ENCODE measurements at regions of chr17 and their contacts with region 1.

Region 1: DNA sequence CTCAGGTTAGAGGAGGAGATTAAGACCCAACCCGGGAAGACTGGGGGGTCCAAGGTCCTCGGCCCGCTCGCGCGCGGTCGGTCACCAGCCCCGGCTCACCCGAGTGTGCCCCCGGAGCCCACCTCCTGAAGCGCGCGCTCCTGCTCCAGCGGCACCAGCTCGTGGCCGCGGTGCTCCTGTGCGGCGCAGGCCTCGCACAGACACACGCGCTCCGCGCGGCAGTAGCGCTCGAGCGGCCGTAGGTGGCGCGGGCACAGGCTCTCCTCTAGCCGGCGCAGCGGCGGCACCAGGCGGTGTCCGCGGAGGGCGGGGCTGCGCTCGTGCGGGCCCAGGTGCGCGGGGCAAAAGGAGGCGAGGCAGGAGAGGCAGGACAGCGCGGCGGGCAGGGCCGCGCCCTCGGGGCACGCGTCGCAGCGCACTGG is 618 bp downstream of the TRIM47 start:
- H3K4me3 ChIP-seq: peak overlapping the region; percentile 24
- H3K27ac ChIP-seq: peak overlapping the region; percentile 61; the same call in 1 of the 2 replicates
- H3K4me1 ChIP-seq: peaks cover 2% of the 10 kb centered on the region
- CTCF ChIP-seq: no peak; the same call in none of the 2 replicates

Region 2: GRCh38 chr17:75861927-75862317 is 15.8 kb before region 1 on chr17:
- CTCF ChIA-PET with region 1: interaction called, 84 read pairs
- POLR2A ChIA-PET with region 1: interaction called, 34 read pairs
- H3K4me3 ChIP-seq: no peak overlapping the region
- H3K27ac ChIP-seq: no peak overlapping the region
- H3K4me1 ChIP-seq: 0 out of 2 replicates have a peak, but pooled peaks cover 4% of the 10 kb centered on the region
- CTCF ChIP-seq: no peak

Region 3: DNA sequence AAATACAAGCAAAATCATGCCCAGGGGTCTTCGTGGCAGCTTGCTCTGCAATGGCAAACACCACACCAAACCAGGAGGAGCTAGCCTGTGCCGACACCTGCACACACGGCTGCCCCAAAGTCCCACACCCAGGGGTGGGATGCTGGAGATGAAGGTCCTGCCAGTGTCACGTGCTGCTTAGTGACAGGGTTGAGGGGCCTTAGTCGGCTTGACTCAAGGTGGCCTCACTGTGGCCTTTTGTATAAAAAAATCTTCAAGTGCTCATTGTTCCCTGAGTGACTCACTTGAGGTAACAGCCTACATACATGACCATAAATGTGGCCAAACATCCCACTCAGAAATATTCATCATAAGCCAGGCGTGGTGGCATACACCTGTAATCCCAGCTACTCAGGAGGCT is 11.7 kb after region 1 on chr17:
- CTCF ChIA-PET with region 1: interaction called, 28 read pairs
- POLR2A ChIA-PET with region 1: interaction called, 11 read pairs
- H3K4me3 ChIP-seq: no peak overlapping the region
- H3K27ac ChIP-seq: no peak overlapping the region
- H3K4me1 ChIP-seq: no peaks in the 10 kb centered on the region
- CTCF ChIP-seq: no peak

Region 4: GRCh38 chr17:75896415-75897159 is 18.8 kb after region 1 on chr17 and contains the start of gene TRIM65:
- CTCF ChIA-PET with region 1: interaction called, 28 read pairs
- POLR2A ChIA-PET with region 1: interaction called, 11 read pairs
- H3K4me3 ChIP-seq: peak within 1 kb of the TSS; percentile 86
- H3K27ac ChIP-seq: peak within 1 kb of the TSS; percentile 98
- H3K4me1 ChIP-seq: peaks cover 10% of the 10 kb centered on the region
- CTCF ChIP-seq: no peak

Region 5: DNA sequence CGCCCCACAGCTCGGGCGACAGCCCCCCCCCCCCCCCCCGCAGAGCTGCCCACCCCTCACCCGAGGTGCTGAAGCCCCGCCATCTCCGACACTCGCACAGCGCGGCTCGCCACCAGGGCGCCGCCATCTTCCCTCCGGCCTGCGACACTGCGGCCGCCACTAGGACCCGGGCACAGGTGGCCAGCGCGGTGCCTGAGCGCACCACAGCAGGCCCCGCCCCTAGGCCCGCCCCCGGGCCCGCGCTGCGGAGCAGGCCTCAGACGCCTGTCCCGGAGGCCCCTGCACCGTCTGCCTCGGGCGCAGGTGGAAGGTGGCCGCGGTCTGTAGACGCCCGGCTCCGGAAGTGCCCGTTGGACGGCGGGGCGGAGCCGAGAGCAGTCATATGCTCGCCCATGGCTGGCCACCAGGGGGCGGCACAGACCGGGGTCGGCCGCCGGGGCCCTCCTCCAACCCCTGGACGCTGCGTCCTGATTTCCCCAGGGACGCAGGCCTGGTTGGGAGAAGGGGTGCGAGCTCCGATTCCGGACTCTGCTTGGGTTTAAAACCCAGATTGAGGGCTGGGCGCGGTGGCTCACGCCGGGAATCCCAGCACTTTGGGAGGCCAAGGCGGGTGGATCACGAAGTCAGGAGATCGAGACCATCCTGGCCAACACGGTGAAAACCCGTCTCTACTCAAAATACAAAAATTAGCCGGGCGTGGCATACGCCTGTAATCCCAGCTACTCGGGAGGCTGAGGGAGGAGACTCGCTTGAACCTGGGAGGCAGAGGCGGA is 27.2 kb after region 1 on chr17 and contains the start of gene MRPL38:
- CTCF ChIA-PET with region 1: interaction called, 3 read pairs
- POLR2A ChIA-PET with region 1: interaction called, 11 read pairs
- H3K4me3 ChIP-seq: peak within 1 kb of the TSS; percentile 92
- H3K27ac ChIP-seq: peak within 1 kb of the TSS; percentile 87
- H3K4me1 ChIP-seq: peaks cover 8% of the 10 kb centered on the region
- CTCF ChIP-seq: peak; percentile 99

Measured in HEK293 (cell line).